Panc1 (cell line): ENCODE measurements at regions of chr11 and their contacts with region 1.

Region 1: GRCh38 chr11:119942583-119943297 is 195.2 kb downstream of the TRIM29 start:
- DNase-seq: no peak
- ATAC-seq: no peak
- H3K4me3 ChIP-seq: no peak overlapping the region
- H3K27ac ChIP-seq: no peak overlapping the region
- H3K4me1 ChIP-seq: no peaks in the 10 kb centered on the region
- H3K27me3 ChIP-seq: peaks cover 13% of the 10 kb centered on the region
- CTCF ChIP-seq: no peak

Region 2: GRCh38 chr11:119705362-119705761 is 237.4 kb before region 1 on chr11:
- CTCF ChIA-PET with region 1: interaction called, 13 read pairs
- POLR2A ChIA-PET with region 1: no interaction called
- in situ Hi-C with region 1: no loop called
- intact Hi-C with region 1: no loop called
- DNase-seq: no peak
- ATAC-seq: no peak
- H3K4me3 ChIP-seq: no peak overlapping the region
- H3K27ac ChIP-seq: no peak overlapping the region
- H3K4me1 ChIP-seq: no peaks in the 10 kb centered on the region
- H3K27me3 ChIP-seq: no peaks in the 10 kb centered on the region
- CTCF ChIP-seq: no peak